ENCODE measurements at regions of chr3 and their contacts with region 1.

Region 1: GRCh38 chr3:148319161-148319915 is 378.4 kb upstream of the AGTR1 start:
- DNase-seq: peak; percentile 89
- ATAC-seq: peak; percentile 95
- H3K4me3 ChIP-seq: peak overlapping the region; percentile 8; the same call in 1 of the 2 replicates
- H3K27ac ChIP-seq: peak overlapping the region; percentile 86
- H3K4me1 ChIP-seq: peaks cover 13% of the 10 kb centered on the region
- H3K27me3 ChIP-seq: no peaks in the 10 kb centered on the region
- CTCF ChIP-seq: no peak
- EP300 ChIP-seq: peak; percentile 89 to 98; a peak in 3 of 4 replicates
- POLR2A ChIP-seq: no peak
- RAD21 ChIP-seq: no peak

Region 2: DNA sequence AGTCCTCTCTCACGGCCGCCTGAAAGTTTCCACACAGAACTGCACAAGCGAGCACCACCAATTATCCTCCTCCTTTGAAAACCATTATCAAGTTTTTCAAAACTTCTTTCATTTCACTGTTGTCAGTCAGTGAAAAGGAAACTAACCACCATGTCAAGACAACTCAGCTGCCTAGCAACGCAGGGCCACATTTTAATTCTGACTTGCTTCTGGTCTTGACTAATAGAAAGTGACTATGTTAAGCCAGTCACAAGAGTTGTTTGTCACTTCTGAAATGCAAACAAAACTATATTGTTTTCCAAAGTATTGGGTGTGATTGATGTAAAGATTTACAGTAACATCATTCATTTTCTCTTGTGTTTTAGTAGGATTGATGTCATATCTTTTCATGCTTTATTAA is 234.4 kb before region 1 on chr3:
- CTCF ChIA-PET with region 1: no interaction called
- POLR2A ChIA-PET with region 1: no interaction called
- RAD21 ChIA-PET with region 1: no interaction called
- SMC1A ChIA-PET with region 1: no interaction called
- in situ Hi-C with region 1: no loop called
- intact Hi-C with region 1: loop called (anchors 5 kb)
- DNase-seq: peak; percentile 45
- ATAC-seq: peak; percentile 98
- H3K4me3 ChIP-seq: no peak overlapping the region
- H3K27ac ChIP-seq: no peak overlapping the region
- H3K4me1 ChIP-seq: no peaks in the 10 kb centered on the region
- H3K27me3 ChIP-seq: no peaks in the 10 kb centered on the region
- CTCF ChIP-seq: no peak
- EP300 ChIP-seq: no peak
- POLR2A ChIP-seq: no peak
- RAD21 ChIP-seq: no peak

Region 3: DNA sequence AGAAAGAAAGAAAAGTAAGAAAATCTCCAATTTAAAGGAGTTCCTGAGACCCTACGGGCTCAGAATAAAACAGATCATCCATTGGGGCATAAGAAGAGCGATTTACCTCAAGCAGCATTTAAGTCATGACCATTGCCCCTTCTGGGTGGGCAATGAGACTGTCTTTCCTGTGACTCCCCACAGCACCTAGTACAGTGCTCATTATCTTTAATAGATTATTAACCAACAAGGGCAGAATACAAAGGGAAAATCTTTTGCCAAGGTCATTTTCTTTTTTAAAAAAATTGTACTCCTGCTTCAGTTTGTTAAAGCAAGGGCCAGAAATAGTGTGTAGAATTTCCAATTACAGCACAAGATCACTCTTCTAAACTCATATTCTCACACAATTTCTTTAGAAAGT is 64.9 kb before region 1 on chr3:
- CTCF ChIA-PET with region 1: no interaction called
- POLR2A ChIA-PET with region 1: no interaction called
- RAD21 ChIA-PET with region 1: no interaction called
- SMC1A ChIA-PET with region 1: no interaction called
- in situ Hi-C with region 1: no loop called
- intact Hi-C with region 1: no loop called
- DNase-seq: no peak
- ATAC-seq: no peak
- H3K4me3 ChIP-seq: no peak overlapping the region
- H3K27ac ChIP-seq: no peak overlapping the region
- H3K4me1 ChIP-seq: no peaks in the 10 kb centered on the region
- H3K27me3 ChIP-seq: no peaks in the 10 kb centered on the region
- CTCF ChIP-seq: no peak
- EP300 ChIP-seq: no peak
- POLR2A ChIP-seq: no peak
- RAD21 ChIP-seq: no peak

Region 4: GRCh38 chr3:148297013-148297412 is 22.3 kb before region 1 on chr3:
- CTCF ChIA-PET with region 1: interaction called, 3 read pairs
- POLR2A ChIA-PET with region 1: no interaction called
- RAD21 ChIA-PET with region 1: interaction called, 3 read pairs
- SMC1A ChIA-PET with region 1: interaction called, 6 read pairs
- in situ Hi-C with region 1: no loop called
- intact Hi-C with region 1: loop called (anchors 1 kb)
- DNase-seq: no peak
- ATAC-seq: no peak
- H3K4me3 ChIP-seq: no peak overlapping the region
- H3K27ac ChIP-seq: no peak overlapping the region
- H3K4me1 ChIP-seq: peaks cover 7% of the 10 kb centered on the region
- H3K27me3 ChIP-seq: no peaks in the 10 kb centered on the region
- CTCF ChIP-seq: no peak
- EP300 ChIP-seq: no peak
- POLR2A ChIP-seq: no peak
- RAD21 ChIP-seq: no peak